Spleen (tissue), 13 donors: ENCODE measurements at regions of chr15 and their contacts with region 1.

Region 1: GRCh38 chr15:58980351-58980939 is 7.0 kb upstream of the RNF111 start:
- DNase-seq: no peak
- H3K4me3 ChIP-seq: no peak overlapping the region
- H3K27ac ChIP-seq: peak overlapping the region in 5 of 8 donors; percentile 67 to 80 (median 75)
- H3K4me1 ChIP-seq: peaks cover 29 to 74% (median 45%) of the 10 kb centered on the region in 6 donors
- H3K27me3 ChIP-seq: no peaks in the 10 kb centered on the region
- CTCF ChIP-seq: peak in 9 of 11 experiments; percentile 33 to 66 (median 56)
- POLR2A ChIP-seq: no peak

Region 2: GRCh38 chr15:59138243-59138642 is 157.8 kb after region 1 on chr15:
- intact Hi-C with region 1: loop called (anchors 10 kb)
- DNase-seq: peak; percentile 87
- H3K4me3 ChIP-seq: no peak overlapping the region
- H3K27ac ChIP-seq: no peak overlapping the region
- H3K4me1 ChIP-seq: no peaks in the 10 kb centered on the region
- H3K27me3 ChIP-seq: no peaks in the 10 kb centered on the region
- CTCF ChIP-seq: peak in 10 of 11 experiments; percentile 39 to 74 (median 66)
- POLR2A ChIP-seq: no peak